Sciatic nerve (tissue), 2 donors: ENCODE measurements at regions of chr3 and their contacts with region 1.

Region 1: GRCh38 chr3:141863491-141863890 is 13.0 kb upstream of the ATP1B3 start:
- DNase-seq: no peak
- ATAC-seq: peak; percentile 58

Region 2: DNA sequence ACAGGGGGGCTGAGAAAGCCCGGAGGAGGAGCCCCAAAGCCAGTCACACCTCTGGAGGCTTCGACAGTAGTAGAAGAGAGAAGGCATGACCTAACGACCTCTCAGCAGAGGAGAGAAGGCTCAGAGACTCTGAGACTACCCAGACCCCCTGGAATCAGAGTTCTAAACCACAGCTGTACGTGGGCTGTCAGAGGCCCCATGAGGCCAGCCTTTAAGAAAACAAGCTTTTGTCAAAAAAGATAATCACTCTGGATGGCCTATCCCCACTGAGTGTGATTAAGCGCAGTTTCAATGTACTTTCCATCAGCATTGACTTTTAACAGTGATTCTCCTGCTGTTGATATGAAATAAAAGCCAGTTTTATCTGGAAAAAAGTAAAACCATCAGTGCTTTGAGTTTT is 1598.2 kb before region 1 on chr3:
- intact Hi-C with region 1: loop called (anchors 10 kb)
- DNase-seq: no peak
- ATAC-seq: no peak